ENCODE measurements at regions of chr4 and their contacts with region 1.

Region 1: GRCh38 chr4:119204916-119205315 is 7.6 kb upstream of the USP53 start:
- DNase-seq: no peak
- ATAC-seq: no peak
- H3K4me3 Mint-ChIP-seq: no peak overlapping the region
- H3K27ac Mint-ChIP-seq: no peak overlapping the region
- H3K4me1 Mint-ChIP-seq: peaks cover 24% of the 10 kb centered on the region
- H3K27me3 Mint-ChIP-seq: peaks cover 6% of the 10 kb centered on the region

Region 2: DNA sequence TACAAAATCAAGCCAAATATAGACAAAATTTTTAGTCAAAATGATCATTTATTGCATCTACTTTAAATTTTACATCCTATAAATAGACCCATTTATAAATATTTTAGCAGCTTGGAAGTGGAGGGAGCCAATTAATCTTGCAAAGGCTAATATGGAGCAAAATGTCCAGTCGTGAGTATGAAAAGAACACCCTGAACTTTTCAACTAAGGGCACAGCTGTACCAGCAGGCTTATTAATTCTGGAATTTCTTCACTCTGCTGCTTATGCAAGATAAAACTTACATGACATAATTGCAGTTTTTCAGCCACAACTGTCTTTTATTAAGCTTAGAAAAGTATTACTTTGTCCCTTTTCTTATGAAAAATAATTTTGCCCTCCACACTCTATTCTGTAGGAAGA is 15.3 kb before region 1 on chr4:
- CTCF ChIA-PET with region 1: no interaction called
- POLR2A ChIA-PET with region 1: no interaction called
- intact Hi-C with region 1: loop called in 1 of 2 experiments (anchors 1 kb)
- DNase-seq: no peak
- ATAC-seq: no peak
- H3K4me3 Mint-ChIP-seq: no peak overlapping the region
- H3K27ac Mint-ChIP-seq: no peak overlapping the region
- H3K4me1 Mint-ChIP-seq: no peaks in the 10 kb centered on the region
- H3K27me3 Mint-ChIP-seq: no peaks in the 10 kb centered on the region